Left cardiac atrium (tissue), 4 donors: ENCODE measurements at regions of chr3 and their contacts with region 1.

Region 1: GRCh38 chr3:146189519-146190173 is 28.7 kb upstream of the PLOD2 start:
- DNase-seq: no peak
- ATAC-seq: peak; percentile 78 to 83

Region 2: GRCh38 chr3:145780301-145780700 is 409.3 kb before region 1 on chr3:
- intact Hi-C with region 1: loop called in 1 of 2 experiments (anchors 10 kb)
- DNase-seq: no peak
- ATAC-seq: no peak

Region 3: GRCh38 chr3:146277953-146278631 is 88.4 kb after region 1 on chr3:
- intact Hi-C with region 1: no loop called
- DNase-seq: peak; percentile 26
- ATAC-seq: peak; percentile 68 to 72